ENCODE measurements at regions of chr12 and their contacts with region 1.

Region 1: GRCh38 chr12:111298582-111299436 is 70.1 kb downstream of the PHETA1 start:
- DNase-seq: peak; percentile 85
- ATAC-seq: peak; percentile 91
- H3K4me3 Mint-ChIP-seq: no peak overlapping the region
- H3K27ac Mint-ChIP-seq: no peak overlapping the region
- H3K4me1 Mint-ChIP-seq: peaks cover 9% of the 10 kb centered on the region; the same call in 1 of the 2 replicates
- H3K27me3 Mint-ChIP-seq: no peaks in the 10 kb centered on the region
- CTCF ChIP-seq: peak; percentile 80

Region 2: DNA sequence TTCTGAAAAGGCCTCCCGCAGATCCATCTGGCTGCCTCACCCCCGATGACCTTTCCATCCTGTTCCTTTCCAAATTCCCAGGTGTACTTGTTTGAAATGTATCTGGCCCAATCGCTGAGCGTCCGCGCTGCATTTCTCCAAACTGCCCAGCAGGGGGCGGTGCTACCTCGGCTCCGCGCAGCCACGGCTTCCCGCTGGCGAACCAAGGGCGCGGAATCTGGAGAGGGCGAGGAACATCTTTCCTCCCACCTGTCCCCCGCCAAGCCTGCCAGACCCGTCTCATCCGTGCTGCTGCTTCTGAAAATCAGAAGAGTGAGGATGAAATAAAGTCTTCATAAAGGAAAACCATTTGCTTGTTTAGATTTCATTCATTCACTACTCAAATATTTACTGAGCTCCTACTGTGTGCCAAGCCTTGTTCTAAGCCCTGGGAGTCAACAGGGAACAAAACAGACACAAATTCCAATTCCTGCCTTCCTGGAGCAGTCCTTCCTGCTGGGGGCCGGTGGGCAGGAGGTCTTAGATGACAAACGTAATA is 361.6 kb before region 1 on chr12:
- CTCF ChIA-PET with region 1: interaction called, 14 read pairs
- POLR2A ChIA-PET with region 1: no interaction called
- DNase-seq: peak; percentile 86
- ATAC-seq: peak; percentile 78
- H3K4me3 Mint-ChIP-seq: peak overlapping the region; percentile 78
- H3K27ac Mint-ChIP-seq: peak overlapping the region; percentile 99
- H3K4me1 Mint-ChIP-seq: peaks cover 62% of the 10 kb centered on the region
- H3K27me3 Mint-ChIP-seq: peaks cover 18% of the 10 kb centered on the region
- CTCF ChIP-seq: peak; percentile 89

Region 3: DNA sequence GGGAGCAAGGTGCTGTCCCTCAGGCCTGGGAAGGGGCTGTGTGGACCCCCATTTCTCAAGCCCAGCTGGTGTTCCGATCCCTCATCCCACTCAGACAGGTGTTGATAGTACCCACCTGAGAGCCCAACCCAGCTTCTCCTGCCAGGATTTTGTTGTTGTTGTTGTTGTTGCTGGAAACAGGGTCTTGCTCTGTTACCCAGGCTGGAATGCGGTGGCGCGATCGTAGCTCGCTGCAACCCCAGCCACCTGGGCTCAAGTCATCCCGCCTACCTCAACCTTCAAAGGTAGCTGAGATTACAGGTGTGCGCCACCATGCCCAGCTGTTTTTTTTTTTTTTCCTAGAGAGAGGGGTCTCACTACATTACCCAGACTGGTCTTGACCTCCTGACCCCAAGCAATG is 139.8 kb before region 1 on chr12:
- CTCF ChIA-PET with region 1: interaction called, 13 read pairs
- POLR2A ChIA-PET with region 1: no interaction called
- DNase-seq: no peak
- ATAC-seq: peak; percentile 22
- H3K4me3 Mint-ChIP-seq: no peak overlapping the region
- H3K27ac Mint-ChIP-seq: no peak overlapping the region
- H3K4me1 Mint-ChIP-seq: peaks cover 43% of the 10 kb centered on the region
- H3K27me3 Mint-ChIP-seq: no peaks in the 10 kb centered on the region
- CTCF ChIP-seq: no peak

Region 4: GRCh38 chr12:111216387-111217159 is 82.2 kb before region 1 on chr12:
- CTCF ChIA-PET with region 1: interaction called, 10 read pairs
- POLR2A ChIA-PET with region 1: no interaction called
- DNase-seq: no peak
- ATAC-seq: no peak
- H3K4me3 Mint-ChIP-seq: no peak overlapping the region
- H3K27ac Mint-ChIP-seq: no peak overlapping the region
- H3K4me1 Mint-ChIP-seq: peaks cover 10% of the 10 kb centered on the region
- H3K27me3 Mint-ChIP-seq: no peaks in the 10 kb centered on the region
- CTCF ChIP-seq: no peak

Region 5: DNA sequence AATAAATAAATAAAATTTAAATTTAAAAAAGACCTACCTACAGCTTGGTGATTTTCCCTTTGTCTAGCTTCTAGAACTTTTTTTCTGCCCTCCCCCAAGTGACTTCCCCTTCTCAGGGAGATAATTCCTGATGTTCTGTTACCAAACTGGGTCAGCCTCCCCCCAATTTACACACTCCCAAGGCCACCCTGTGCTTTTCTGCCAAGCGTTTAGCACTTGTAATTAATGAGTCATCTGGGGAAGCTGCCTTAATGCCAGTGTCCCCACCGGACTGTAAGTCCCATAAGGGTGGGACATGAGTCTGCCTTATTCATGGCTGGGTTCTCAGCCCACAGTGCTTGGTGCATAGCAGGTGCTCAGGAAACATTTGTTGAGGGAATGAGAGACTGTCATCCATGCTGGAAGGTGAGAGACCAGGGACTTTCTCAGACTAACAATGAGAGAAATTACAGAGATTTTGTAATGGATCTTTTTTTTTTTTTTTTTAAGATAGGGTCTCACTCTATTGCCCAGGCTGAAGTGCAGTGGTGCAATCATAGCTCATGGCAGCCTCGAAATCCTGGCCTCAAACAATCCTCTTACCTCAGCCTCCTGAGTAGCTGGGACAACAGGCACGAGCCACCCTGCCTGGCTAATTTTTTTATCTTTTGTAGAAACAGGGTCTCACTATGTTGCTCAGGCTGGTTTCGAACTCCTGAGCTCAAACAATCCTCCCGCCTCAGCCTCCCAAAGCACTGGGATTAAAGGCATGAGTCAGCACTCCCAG is 36.7 kb before region 1 on chr12:
- CTCF ChIA-PET with region 1: interaction called, 188 read pairs
- POLR2A ChIA-PET with region 1: no interaction called
- DNase-seq: no peak
- ATAC-seq: no peak
- H3K4me3 Mint-ChIP-seq: no peak overlapping the region
- H3K27ac Mint-ChIP-seq: peak overlapping the region; percentile 69; the same call in 1 of the 2 replicates
- H3K4me1 Mint-ChIP-seq: no peaks in the 10 kb centered on the region
- H3K27me3 Mint-ChIP-seq: no peaks in the 10 kb centered on the region; the same call in 1 of the 2 replicates
- CTCF ChIP-seq: no peak

Region 6: GRCh38 chr12:111287125-111287900 is 11.5 kb before region 1 on chr12:
- CTCF ChIA-PET with region 1: interaction called, 42 read pairs
- POLR2A ChIA-PET with region 1: no interaction called
- DNase-seq: no peak
- ATAC-seq: no peak
- H3K4me3 Mint-ChIP-seq: no peak overlapping the region
- H3K27ac Mint-ChIP-seq: no peak overlapping the region; the same call in 1 of the 2 replicates
- H3K4me1 Mint-ChIP-seq: peaks cover 20% of the 10 kb centered on the region
- H3K27me3 Mint-ChIP-seq: no peaks in the 10 kb centered on the region
- CTCF ChIP-seq: no peak

Region 7: GRCh38 chr12:111318450-111318849 is 19.6 kb after region 1 on chr12:
- CTCF ChIA-PET with region 1: interaction called, 16 read pairs
- POLR2A ChIA-PET with region 1: no interaction called
- DNase-seq: no peak
- ATAC-seq: no peak
- H3K4me3 Mint-ChIP-seq: no peak overlapping the region
- H3K27ac Mint-ChIP-seq: no peak overlapping the region
- H3K4me1 Mint-ChIP-seq: no peaks in the 10 kb centered on the region
- H3K27me3 Mint-ChIP-seq: no peaks in the 10 kb centered on the region
- CTCF ChIP-seq: no peak